CD14-positive monocyte (primary cell): ENCODE measurements at regions of chr9 and their contacts with region 1.

Region 1: GRCh38 chr9:72952914-72953313 is at the start of gene ALDH1A1:
- DNase-seq: peak; percentile 18 to 62 (median 49)
- H3K4me3 ChIP-seq: peak within 1 kb of the TSS; percentile 50 to 74 (median 73)
- H3K4me3 Mint-ChIP-seq: peak within 1 kb of the TSS; percentile 65 to 93
- H3K27ac ChIP-seq: peak within 1 kb of the TSS in 1 of 2 donors; percentile 78
- H3K27ac Mint-ChIP-seq: peak within 1 kb of the TSS; percentile 81 to 95 (median 88)
- H3K4me1 ChIP-seq: peaks cover 67 to 77% of the 10 kb centered on the region in 2 donors
- H3K4me1 Mint-ChIP-seq: peaks cover 81% of the 10 kb centered on the region
- H3K27me3 ChIP-seq: no peaks in the 10 kb centered on the region
- H3K27me3 Mint-ChIP-seq: no peaks in the 10 kb centered on the region
- CTCF ChIP-seq: no peak
- polyA plus RNA-seq, gene ALDH1A1: 28.6 to 117 (median 105) TPM

Region 2: DNA sequence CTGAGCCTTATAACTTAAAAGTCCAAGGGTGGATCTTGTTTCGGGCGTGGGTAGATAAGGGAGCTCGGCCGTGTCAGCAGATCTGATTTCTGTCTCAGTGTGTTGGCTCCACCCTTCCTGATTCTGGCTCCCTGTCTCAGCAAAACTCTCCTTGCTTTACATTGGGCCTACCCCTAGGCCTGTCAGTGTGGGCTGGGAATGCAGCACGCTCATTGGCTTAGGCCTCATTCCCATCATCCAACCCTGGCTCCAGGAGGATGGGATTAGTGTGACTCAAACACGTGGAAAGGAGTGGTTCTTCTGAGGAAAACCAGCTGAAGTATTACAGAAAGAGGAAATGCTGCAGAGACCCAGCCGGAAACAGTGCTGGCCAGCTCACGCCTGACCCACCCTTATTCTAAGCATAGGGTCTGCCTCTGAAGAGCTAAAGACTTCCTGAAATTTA is 647.8 kb before region 1 on chr9:
- intact Hi-C with region 1: loop called in 1 of 2 experiments (anchors 10 kb)
- DNase-seq: peak; percentile 98 to 99 (median 99)
- H3K4me3 ChIP-seq: peak overlapping the region; percentile 56 to 99 (median 82)
- H3K4me3 Mint-ChIP-seq: peak overlapping the region; percentile 73 to 91
- H3K27ac ChIP-seq: peak overlapping the region; percentile 87 to 92
- H3K27ac Mint-ChIP-seq: peak overlapping the region; percentile 97 to 99 (median 97)
- H3K4me1 ChIP-seq: peaks cover 60 to 73% of the 10 kb centered on the region in 2 donors
- H3K4me1 Mint-ChIP-seq: peaks cover 70% of the 10 kb centered on the region
- H3K27me3 ChIP-seq: no peaks in the 10 kb centered on the region
- H3K27me3 Mint-ChIP-seq: no peaks in the 10 kb centered on the region
- CTCF ChIP-seq: no peak

Region 3: DNA sequence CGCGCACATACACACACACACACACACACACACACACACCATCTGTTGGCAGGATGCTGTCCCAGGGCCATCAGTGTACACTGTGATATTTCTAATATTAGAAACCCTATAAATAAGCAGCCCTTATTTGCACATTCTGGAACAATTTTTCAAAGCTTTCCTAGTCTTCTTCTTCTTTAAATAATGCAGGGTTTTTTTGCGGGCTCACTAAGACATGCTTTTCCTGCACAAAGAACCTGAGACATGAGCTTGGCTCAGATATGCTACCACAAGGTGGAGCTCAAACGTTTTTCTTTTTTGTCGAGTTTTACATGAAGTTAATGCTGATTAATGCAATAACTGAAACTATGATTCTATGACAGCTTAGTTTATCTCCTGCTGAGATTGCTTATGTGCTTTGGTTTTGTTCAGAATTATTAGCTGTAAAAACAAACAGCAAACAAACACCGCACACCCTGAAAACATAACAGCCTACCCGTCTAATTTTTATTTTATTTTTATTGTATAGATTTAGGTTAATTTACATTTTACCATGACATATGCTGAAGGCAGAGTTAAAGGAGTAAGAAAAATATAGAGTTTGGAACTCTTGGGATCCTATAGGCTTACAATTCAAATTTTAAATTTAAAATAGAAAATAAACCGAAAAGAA is 95.8 kb before region 1 on chr9:
- intact Hi-C with region 1: no loop called
- DNase-seq: peak; percentile 29 to 46 (median 40)
- H3K4me3 ChIP-seq: no peak overlapping the region
- H3K4me3 Mint-ChIP-seq: no peak overlapping the region
- H3K27ac ChIP-seq: no peak overlapping the region
- H3K27ac Mint-ChIP-seq: no peak overlapping the region
- H3K4me1 ChIP-seq: no peaks in the 10 kb centered on the region
- H3K4me1 Mint-ChIP-seq: peaks cover 4% of the 10 kb centered on the region
- H3K27me3 ChIP-seq: no peaks in the 10 kb centered on the region
- H3K27me3 Mint-ChIP-seq: peaks cover 0 to 4% (median 0%) of the 10 kb centered on the region in 3 donors
- CTCF ChIP-seq: peak; percentile 56

Region 4: GRCh38 chr9:72983512-72984225 is 30.8 kb after region 1 on chr9:
- intact Hi-C with region 1: no loop called
- DNase-seq: no peak
- H3K4me3 ChIP-seq: no peak overlapping the region
- H3K4me3 Mint-ChIP-seq: no peak overlapping the region
- H3K27ac ChIP-seq: no peak overlapping the region
- H3K27ac Mint-ChIP-seq: no peak overlapping the region
- H3K4me1 ChIP-seq: no peaks in the 10 kb centered on the region
- H3K4me1 Mint-ChIP-seq: peaks cover 4% of the 10 kb centered on the region
- H3K27me3 ChIP-seq: no peaks in the 10 kb centered on the region
- H3K27me3 Mint-ChIP-seq: peaks cover 0 to 2% (median 1%) of the 10 kb centered on the region in 3 donors
- CTCF ChIP-seq: no peak

Region 5: DNA sequence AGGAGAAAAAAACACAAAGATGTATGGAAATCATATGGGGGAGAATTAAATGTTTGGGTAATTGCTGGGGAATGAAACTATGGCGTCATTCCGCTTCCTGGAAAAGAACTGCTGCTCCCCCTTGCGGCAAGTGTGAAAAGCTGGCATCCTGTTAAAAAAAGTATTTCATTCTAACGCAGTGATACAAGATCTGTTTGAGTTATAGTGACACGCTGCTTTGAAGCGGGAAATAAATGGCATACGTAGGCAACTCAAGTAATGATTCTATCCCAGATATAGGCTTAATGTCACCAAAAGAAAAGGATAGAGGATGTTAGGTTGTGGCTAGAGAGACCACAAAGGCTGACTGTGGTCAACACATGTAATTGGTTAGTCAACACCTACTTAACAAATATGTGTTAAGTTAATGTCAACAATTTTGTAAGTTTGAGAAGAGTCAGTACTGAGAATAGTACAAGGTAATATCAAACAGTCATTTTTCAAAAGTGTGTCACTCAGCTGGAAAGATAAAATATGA is 70.2 kb after region 1 on chr9:
- intact Hi-C with region 1: no loop called
- DNase-seq: peak; percentile 36 to 62 (median 44)
- H3K4me3 ChIP-seq: no peak overlapping the region
- H3K4me3 Mint-ChIP-seq: no peak overlapping the region
- H3K27ac ChIP-seq: no peak overlapping the region
- H3K27ac Mint-ChIP-seq: no peak overlapping the region
- H3K4me1 ChIP-seq: no peaks in the 10 kb centered on the region
- H3K4me1 Mint-ChIP-seq: peaks cover 6% of the 10 kb centered on the region
- H3K27me3 ChIP-seq: no peaks in the 10 kb centered on the region
- H3K27me3 Mint-ChIP-seq: no peaks in the 10 kb centered on the region
- CTCF ChIP-seq: peak; percentile 94

Region 6: GRCh38 chr9:73162987-73163768 is 210.3 kb after region 1 on chr9:
- intact Hi-C with region 1: loop called in 1 of 2 experiments (anchors 10 kb)
- DNase-seq: no peak
- H3K4me3 ChIP-seq: no peak overlapping the region
- H3K4me3 Mint-ChIP-seq: no peak overlapping the region
- H3K27ac ChIP-seq: peak overlapping the region in 1 of 2 donors; percentile 33
- H3K27ac Mint-ChIP-seq: peak overlapping the region in 3 of 7 donors; percentile 28 to 75 (median 63)
- H3K4me1 ChIP-seq: no peaks in the 10 kb centered on the region
- H3K4me1 Mint-ChIP-seq: peaks cover 13% of the 10 kb centered on the region
- H3K27me3 ChIP-seq: no peaks in the 10 kb centered on the region
- H3K27me3 Mint-ChIP-seq: no peaks in the 10 kb centered on the region
- CTCF ChIP-seq: no peak

Region 7: GRCh38 chr9:73260506-73260905 is 307.6 kb after region 1 on chr9:
- intact Hi-C with region 1: no loop called
- DNase-seq: no peak
- H3K4me3 ChIP-seq: no peak overlapping the region
- H3K4me3 Mint-ChIP-seq: no peak overlapping the region
- H3K27ac ChIP-seq: no peak overlapping the region
- H3K27ac Mint-ChIP-seq: no peak overlapping the region
- H3K4me1 ChIP-seq: no peaks in the 10 kb centered on the region
- H3K4me1 Mint-ChIP-seq: peaks cover 5% of the 10 kb centered on the region
- H3K27me3 ChIP-seq: no peaks in the 10 kb centered on the region
- H3K27me3 Mint-ChIP-seq: no peaks in the 10 kb centered on the region
- CTCF ChIP-seq: no peak